Right ventricle myocardium inferior (tissue), 1 donor: ENCODE measurements at regions of chr10 and their contacts with region 1.

Region 1: DNA sequence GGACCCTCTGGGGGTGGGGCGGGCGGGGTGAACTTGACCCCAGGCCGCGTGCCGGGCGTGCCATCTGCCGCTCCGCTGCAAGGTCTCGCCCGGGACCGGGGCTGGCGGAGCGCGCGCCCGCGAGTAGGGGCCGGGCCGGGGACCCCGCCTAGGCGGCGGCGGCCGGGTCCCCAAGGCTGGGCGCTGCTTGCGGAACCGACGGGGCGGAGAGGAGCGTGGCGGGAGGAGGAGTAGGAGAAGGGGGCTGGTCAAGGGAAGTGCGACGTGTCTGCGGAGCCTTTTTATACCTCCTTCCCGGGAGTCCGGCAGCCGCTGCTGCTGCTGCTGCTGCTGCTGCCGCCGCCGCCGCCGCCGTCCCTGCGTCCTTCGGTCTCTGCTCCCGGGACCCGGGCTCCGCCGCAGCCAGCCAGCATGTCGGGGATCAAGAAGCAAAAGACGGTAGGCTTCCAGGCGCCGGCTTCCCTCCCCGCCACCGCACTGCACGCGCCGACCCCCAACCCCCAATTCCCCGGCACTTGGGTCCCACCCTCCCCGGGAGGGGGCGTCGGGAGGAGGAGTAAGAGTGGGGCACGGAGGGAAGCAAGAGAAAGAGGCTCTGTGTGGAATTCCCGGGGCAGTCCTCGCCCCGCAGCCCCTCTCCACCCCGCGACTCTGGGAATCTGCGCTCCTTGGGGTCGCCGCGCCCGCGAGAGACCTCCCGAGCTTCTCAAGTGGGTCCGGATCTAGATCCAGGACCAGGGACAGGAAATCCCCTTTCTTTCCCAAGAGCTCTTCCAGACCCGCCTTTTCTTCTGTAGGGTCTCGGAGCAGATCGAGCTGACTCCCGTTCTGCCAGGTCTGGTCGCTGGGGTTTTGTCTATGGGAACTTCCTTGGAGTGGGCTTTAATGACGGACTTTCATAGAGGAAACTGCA is at the start of gene PAPSS2:
- DNase-seq: peak; percentile 86
- ATAC-seq: peak; percentile 88
- total RNA-seq, gene PAPSS2: 11.1 TPM

Region 2: GRCh38 chr10:87531908-87532622 is 127.8 kb before region 1 on chr10:
- intact Hi-C with region 1: loop called (anchors 10 kb)
- DNase-seq: no peak
- ATAC-seq: peak; percentile 57

Region 3: DNA sequence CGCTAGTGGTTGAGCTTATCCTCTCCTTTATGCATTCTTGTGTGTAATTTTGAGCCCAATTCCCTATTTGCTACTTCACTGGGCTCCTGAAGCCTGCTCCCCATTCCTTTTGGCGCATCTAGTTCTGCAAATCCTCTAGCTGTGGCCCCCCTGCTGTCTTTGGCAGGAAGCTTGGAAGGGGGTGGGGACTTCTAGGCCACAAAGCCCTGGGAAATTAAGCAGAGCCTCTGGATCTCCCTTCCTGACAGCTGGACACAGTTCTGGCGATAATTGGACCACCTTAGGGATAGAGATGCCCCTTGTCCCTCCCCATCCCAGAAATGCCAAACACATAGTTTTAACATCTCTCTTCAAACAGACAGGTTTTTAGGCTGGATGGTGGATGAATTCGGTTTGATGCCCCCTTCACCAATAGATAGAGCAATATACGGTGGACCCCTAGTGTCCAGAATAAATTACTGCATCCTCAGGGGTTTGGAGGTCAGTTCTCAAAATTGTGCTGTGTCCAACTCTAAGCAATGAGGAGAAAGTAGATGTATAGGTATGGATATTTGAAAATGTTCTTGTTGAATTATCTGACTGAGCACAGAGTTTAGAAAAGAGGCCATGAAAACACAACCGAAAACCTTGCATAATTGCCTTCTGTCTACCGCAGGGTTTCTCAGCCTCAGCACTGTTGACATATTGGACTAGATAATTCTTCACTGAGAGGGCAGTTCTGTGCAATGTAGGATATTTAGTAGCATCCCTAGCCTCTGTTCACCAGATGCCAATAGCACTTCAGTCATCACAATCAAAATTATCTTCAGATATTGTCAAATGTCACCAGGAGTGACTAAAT is 75.4 kb after region 1 on chr10:
- intact Hi-C with region 1: loop called (anchors 1 kb)
- DNase-seq: no peak
- ATAC-seq: peak; percentile 79